ENCODE measurements at regions of chr6 and their contacts with region 1.

Region 1: GRCh38 chr6:127464881-127465459 is 5.8 kb upstream of the KIAA0408 start:
- DNase-seq: peak; percentile 70 to 89
- H3K4me3 ChIP-seq: no peak overlapping the region
- H3K27ac ChIP-seq: peak overlapping the region in 3 of 5 donors; percentile 58 to 64 (median 63)
- H3K4me1 ChIP-seq: peaks cover 10 to 34% (median 27%) of the 10 kb centered on the region in 4 donors
- H3K27me3 ChIP-seq: no peaks in the 10 kb centered on the region
- CTCF ChIP-seq: peak in 5 of 7 experiments; percentile 50 to 76 (median 68)
- EP300 ChIP-seq: no peak
- POLR2A ChIP-seq: no peak

Region 2: DNA sequence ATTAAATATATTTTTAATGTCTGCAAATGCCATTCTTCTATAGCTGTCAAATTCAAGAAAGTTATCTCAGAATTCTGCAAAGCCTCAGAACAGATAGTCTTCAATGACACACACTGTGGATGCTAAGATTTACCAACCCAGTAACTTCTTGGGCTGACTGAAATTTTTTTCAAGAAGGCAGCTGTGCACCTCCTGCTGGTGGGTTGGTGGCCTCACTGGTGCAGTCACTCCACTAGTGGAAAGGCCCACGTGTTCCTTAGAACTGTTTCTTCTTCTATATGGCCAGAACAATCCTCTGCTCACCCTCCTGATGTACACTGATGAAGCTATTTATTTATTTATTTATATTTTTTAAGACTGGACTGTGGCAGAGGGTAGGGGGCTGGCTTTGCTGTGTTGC is 82.2 kb after region 1 on chr6:
- intact Hi-C with region 1: loop called (anchors 10 kb)
- DNase-seq: peak in 1 of 2 donors; percentile 9
- H3K4me3 ChIP-seq: no peak overlapping the region
- H3K27ac ChIP-seq: no peak overlapping the region
- H3K4me1 ChIP-seq: no peaks in the 10 kb centered on the region
- H3K27me3 ChIP-seq: no peaks in the 10 kb centered on the region
- CTCF ChIP-seq: no peak
- EP300 ChIP-seq: no peak
- POLR2A ChIP-seq: no peak

Measured in stomach (tissue), 19 donors.